Ovary (tissue), 10 donors: ENCODE measurements at regions of chr18 and their contacts with region 1.

Region 1: DNA sequence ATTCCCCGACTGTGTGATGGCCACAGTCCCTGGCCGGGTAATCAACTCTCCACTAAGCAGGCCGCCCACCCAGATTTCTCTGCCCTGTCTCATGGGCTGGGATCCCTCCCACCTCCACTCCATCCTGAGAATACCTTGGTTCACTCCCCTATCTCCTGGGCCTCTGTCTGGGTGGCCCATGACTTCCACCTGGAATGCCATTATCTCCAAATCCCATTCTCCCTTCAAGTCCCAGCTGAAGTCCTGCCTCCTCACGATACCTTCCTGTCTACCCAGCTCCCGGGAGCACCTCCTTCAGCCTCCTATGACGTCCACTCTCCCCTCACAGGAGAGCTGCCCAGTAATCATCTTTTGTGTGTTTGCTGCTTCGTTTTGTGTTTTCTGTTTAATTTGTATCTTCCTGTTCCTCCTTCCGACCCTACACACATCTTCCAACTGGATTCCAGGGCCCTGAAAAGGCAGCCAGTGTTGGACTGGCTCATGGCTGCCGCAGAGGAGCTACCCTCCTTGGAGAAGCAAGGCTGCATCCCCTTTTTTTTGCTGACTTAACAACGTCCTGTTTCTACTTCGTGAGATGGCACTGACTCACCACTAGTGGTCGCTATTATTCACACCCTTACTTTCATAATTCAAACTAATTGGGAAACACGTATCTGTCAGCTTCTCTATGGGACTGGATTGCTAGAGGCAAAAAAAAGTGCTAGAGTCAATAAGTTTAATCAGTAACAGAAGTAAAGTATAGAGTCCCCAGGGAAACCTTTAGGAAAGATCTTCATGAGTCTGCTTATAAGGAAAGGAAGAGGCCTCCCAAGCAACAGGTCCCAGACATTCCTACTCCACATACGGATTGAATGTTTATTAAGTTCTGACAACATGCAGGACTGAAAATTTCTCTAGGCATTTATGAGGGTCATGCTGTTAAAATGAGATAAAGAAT is 171.9 kb upstream of the GATA6 start:
- DNase-seq: peak in 2 of 5 donors; percentile 19 to 38
- H3K4me3 ChIP-seq: no peak overlapping the region
- H3K27ac ChIP-seq: no peak overlapping the region
- H3K4me1 ChIP-seq: no peaks in the 10 kb centered on the region
- H3K27me3 ChIP-seq: no peaks in the 10 kb centered on the region
- CTCF ChIP-seq: peak; percentile 38 to 64 (median 52)
- EP300 ChIP-seq: no peak
- POLR2A ChIP-seq: no peak

Region 2: DNA sequence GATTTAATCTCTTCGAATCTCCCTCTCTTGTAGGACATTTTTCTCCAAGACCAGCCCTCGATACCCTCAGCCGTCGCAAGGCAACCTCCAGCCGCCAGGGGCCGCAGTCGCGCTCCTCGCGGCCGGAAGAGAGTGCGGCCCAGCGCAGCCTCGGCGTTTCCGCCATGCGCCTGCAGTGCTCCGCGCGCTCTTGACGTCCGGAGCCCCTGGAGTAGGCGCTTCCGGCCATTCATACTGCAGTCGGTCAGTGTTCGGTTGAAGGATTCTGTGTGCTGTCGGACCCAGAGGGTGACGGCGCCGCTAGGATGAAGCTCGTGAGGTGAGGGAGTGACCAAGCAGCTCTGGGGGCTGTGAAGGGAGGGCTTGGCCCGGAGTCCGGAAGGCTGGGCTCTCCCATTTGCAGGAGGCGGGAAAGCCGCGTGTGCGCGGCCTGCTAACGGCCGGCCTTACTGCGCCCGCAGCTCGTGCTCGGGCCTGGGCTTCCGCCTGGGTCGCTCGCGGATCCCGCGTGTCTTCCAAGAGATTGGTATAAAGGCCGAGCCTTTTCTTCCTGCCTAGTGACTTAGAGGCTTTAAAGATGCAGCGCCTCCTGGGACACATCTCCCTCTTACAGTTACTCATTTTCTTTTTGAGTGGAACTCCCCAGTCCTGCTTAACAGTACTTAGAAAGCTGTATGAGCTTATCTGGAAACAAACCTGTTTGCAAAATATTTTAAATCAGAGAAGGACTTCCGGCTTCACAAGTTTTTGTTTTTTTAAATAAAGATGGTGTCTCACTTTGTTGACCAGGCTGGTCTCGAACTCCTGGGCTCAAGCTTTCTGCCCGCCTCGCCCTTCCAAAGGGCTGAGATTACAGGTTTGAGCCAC is 385.1 kb before region 1 on chr18 and contains the start of gene SNRPD1:
- intact Hi-C with region 1: loop called in 1 of 4 experiments (anchors 5 kb)
- DNase-seq: peak; percentile 80 to 93 (median 84)
- H3K4me3 ChIP-seq: peak within 1 kb of the TSS; percentile 77
- H3K27ac ChIP-seq: peak within 1 kb of the TSS; percentile 7 to 32
- H3K4me1 ChIP-seq: peaks cover 8% of the 10 kb centered on the region
- H3K27me3 ChIP-seq: no peaks in the 10 kb centered on the region
- CTCF ChIP-seq: peak; percentile 86 to 89 (median 89)
- EP300 ChIP-seq: no peak
- POLR2A ChIP-seq: peak; percentile 41
- total RNA-seq, gene SNRPD1: 3.9 to 52.0 (median 37.3) TPM

Region 3: DNA sequence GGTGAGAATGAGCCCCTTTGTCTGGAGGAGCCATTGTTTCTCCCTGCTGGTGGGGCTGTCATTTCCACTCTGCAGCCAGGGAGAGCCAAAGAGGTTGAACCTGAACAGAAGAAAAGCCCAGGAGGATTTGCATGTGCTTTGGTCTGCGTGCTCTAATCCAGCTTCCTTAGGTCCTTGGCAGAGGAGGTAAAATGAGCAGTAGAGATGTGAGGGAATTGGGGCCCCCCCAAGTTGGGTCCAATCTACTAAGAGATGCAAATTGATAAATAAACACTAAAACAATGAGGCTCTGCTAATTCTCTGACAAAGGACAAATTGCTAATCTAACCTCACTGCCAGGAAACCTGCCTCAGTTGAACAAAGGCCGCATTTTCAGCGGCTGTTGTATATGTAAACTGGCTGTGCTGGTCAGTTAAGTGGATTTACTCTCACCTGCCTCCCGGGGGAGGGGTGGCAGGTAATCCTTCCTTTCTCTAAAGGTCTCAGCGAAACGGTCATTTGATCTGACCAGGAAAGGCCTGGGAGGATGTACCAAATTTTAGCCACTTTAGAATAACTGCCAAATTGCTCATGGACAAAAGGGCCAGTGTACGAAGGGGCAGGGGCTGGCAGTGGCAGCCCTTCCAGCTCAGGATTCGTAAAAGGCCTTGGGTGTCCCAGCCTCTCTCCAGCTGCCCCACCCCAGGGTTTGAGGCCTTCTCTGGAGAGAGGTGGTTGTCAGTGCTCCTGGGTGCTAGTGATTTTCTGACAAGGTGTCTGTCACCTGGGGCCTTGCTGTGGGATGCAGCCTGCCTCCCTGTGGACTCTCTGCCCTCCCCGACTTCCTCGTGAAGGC is 63.3 kb before region 1 on chr18:
- intact Hi-C with region 1: no loop called
- DNase-seq: no peak
- H3K4me3 ChIP-seq: no peak overlapping the region
- H3K27ac ChIP-seq: no peak overlapping the region
- H3K4me1 ChIP-seq: no peaks in the 10 kb centered on the region
- H3K27me3 ChIP-seq: no peaks in the 10 kb centered on the region
- CTCF ChIP-seq: no peak
- EP300 ChIP-seq: no peak
- POLR2A ChIP-seq: no peak

Region 4: DNA sequence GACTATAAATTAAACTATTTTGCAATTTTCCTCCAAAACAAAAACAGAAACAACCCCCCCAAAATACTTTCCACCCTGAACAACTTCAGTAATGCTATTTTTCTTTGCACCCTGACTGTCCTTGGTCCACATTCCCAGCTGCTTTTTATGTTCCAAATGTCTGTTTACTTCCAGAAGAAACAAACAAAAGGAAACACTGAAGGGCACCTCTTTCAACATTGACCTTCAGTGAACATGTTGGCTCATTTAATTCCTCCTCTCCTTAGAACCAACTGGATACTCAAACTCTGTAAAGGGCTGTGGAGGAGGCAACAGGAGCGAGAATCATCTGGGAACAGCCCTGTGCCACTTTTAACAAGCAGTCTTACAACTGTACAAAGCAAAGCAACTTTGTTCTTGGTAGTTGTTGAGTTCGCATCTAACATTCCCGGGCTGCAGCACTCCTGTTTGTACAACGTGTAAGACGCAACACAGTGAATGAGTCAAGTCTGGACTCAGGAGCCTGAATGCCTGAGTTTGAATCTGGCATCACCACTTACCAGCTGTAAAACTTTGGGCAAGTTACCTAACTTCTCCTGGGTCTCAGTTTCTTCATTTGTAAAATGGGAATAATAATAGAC is 60.5 kb after region 1 on chr18:
- intact Hi-C with region 1: no loop called
- DNase-seq: no peak
- H3K4me3 ChIP-seq: no peak overlapping the region
- H3K27ac ChIP-seq: no peak overlapping the region
- H3K4me1 ChIP-seq: no peaks in the 10 kb centered on the region
- H3K27me3 ChIP-seq: no peaks in the 10 kb centered on the region
- CTCF ChIP-seq: no peak
- EP300 ChIP-seq: no peak
- POLR2A ChIP-seq: no peak